ENCODE measurements at regions of chr2 and their contacts with region 1.

Region 1: GRCh38 chr2:147836099-147836498 is 8.7 kb upstream of the ACVR2A start:
- DNase-seq: no peak
- H3K4me3 ChIP-seq: no peak overlapping the region
- H3K27ac ChIP-seq: no peak overlapping the region
- H3K4me1 ChIP-seq: no peaks in the 10 kb centered on the region
- H3K27me3 ChIP-seq: no peaks in the 10 kb centered on the region
- CTCF ChIP-seq: no peak

Region 2: GRCh38 chr2:147937744-147938349 is 101.7 kb after region 1 on chr2:
- intact Hi-C with region 1: no loop called
- DNase-seq: no peak
- H3K4me3 ChIP-seq: no peak overlapping the region
- H3K27ac ChIP-seq: no peak overlapping the region
- H3K4me1 ChIP-seq: no peaks in the 10 kb centered on the region
- H3K27me3 ChIP-seq: no peaks in the 10 kb centered on the region
- CTCF ChIP-seq: peak; percentile 74 to 84

Region 3: DNA sequence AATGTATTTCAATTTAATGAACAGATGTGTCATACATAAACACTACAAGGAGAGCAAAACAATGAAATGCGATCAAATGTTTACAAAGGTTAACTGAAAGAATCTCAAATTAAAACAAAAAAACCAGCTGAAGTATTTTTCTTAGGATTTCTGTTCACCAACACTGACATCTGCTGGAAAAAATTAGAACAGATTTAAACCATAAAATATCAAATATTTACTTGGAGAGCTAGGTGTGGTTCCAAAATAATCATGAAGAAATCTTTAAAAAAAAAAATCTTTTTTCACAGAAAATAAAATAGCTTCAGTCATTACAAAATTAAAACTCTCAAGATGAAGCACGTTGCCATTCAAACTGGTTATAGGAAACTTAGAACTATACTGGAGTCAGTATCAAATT is 1737.7 kb after region 1 on chr2:
- intact Hi-C with region 1: loop called (anchors 10 kb)
- DNase-seq: no peak
- H3K4me3 ChIP-seq: no peak overlapping the region
- H3K27ac ChIP-seq: peak overlapping the region in 1 of 2 donors; percentile 54
- H3K4me1 ChIP-seq: peaks cover 0 to 27% (median 15%) of the 10 kb centered on the region in 4 donors
- H3K27me3 ChIP-seq: no peaks in the 10 kb centered on the region
- CTCF ChIP-seq: peak; percentile 20 to 26

Measured in tibial artery (tissue), 4 donors.